ENCODE measurements at regions of chr17 and their contacts with region 1.

Region 1: DNA sequence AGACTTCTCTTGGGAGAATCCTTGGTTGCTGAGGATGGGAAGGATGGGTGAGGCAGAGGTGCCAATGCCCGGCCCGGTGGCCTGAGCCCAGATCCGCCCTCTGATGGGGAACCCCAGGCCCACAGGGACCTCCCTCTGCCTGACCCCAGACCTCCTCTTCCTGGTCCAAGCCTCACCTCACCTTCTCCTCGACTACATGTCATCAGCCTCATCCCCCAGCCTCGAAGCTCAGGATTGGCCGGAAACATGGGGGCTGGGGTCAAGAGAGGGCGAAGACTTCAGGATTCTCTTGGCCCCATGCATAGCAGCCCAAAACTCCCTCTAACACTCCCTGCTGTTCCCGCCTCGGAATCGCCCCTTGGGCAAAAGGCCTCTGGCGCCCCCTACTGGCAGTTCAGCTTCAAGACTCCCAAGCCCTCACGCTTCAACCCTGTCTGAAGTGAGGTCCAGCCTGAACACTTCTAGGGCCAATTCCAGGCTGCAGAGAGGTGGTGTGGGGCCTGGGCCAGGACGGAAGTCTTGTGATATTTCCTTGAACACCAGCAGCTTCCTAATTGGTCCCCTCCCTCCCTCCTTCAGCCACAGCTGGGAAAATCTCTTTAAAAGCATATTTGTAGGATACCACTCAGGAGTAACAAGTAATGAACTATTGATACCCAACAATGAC is 47.2 kb downstream of the ARHGAP27 start:
- DNase-seq: peak; percentile 77 to 91 (median 83)
- H3K4me3 ChIP-seq: no peak overlapping the region
- H3K4me3 Mint-ChIP-seq: no peak overlapping the region
- H3K27ac ChIP-seq: no peak overlapping the region
- H3K27ac Mint-ChIP-seq: no peak overlapping the region
- H3K4me1 ChIP-seq: peaks cover 6% of the 10 kb centered on the region
- H3K4me1 Mint-ChIP-seq: peaks cover 0 to 3% (median 2%) of the 10 kb centered on the region in 3 donors
- H3K27me3 ChIP-seq: no peaks in the 10 kb centered on the region
- H3K27me3 Mint-ChIP-seq: peaks cover 8 to 17% of the 10 kb centered on the region in 2 donors

Region 2: DNA sequence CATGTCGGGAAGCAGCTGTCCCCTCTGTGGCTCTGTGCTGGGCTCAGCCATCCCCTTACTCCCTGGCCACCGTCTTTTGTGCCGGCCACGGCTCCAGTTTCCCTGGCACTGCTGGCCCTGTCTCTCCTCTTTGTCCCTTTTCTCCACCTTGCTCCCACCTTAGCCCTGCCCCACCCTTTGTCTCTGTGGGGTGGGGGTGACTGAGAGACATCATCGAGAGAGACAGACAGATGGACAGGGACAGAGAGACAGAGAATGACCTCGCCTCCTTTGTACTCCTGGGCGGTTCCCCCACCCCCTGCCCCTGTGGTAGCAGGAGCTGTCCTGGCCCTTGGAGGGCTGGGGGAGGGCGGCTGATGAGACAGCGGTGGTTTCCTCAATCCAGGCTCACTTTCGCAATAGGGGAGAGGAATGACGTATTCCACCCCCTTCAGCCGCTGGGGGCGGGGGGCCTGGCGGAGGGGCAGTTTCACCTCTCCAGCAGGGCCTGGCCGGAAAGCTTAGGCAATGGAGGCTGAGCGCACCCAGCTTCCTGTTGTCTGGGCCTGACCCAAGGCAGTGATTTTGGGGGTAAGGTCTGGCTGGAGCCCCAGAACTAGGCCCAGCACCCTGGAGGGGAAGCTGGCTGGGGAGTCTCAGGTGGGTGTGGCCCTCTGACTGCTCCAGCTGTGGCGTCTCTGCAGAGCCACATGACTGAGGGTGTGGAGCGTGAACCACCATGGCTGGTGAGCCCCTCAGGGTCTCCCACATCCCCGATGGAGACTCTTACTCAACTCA is 156.5 kb before region 1 on chr17:
- CTCF ChIA-PET with region 1: interaction called, 26 read pairs
- POLR2A ChIA-PET with region 1: no interaction called
- DNase-seq: peak; percentile 78 to 91 (median 85)
- H3K4me3 ChIP-seq: peak overlapping the region; percentile 95
- H3K4me3 Mint-ChIP-seq: peak overlapping the region; percentile 96 to 100 (median 99)
- H3K27ac ChIP-seq: peak overlapping the region; percentile 98
- H3K27ac Mint-ChIP-seq: peak overlapping the region; percentile 97 to 100 (median 100)
- H3K4me1 ChIP-seq: peaks cover 75% of the 10 kb centered on the region
- H3K4me1 Mint-ChIP-seq: peaks cover 80 to 90% (median 83%) of the 10 kb centered on the region in 3 donors
- H3K27me3 ChIP-seq: no peaks in the 10 kb centered on the region
- H3K27me3 Mint-ChIP-seq: peaks cover 0 to 3% of the 10 kb centered on the region in 2 donors

Region 3: GRCh38 chr17:45235416-45236281 is 149.8 kb before region 1 on chr17:
- CTCF ChIA-PET with region 1: interaction called, 26 read pairs
- POLR2A ChIA-PET with region 1: no interaction called
- DNase-seq: peak; percentile 69 to 84 (median 70)
- H3K4me3 ChIP-seq: no peak overlapping the region
- H3K4me3 Mint-ChIP-seq: peak overlapping the region in 5 of 7 donors; percentile 24 to 72 (median 30)
- H3K27ac ChIP-seq: no peak overlapping the region
- H3K27ac Mint-ChIP-seq: peak overlapping the region; percentile 79 to 98 (median 90)
- H3K4me1 ChIP-seq: peaks cover 35% of the 10 kb centered on the region
- H3K4me1 Mint-ChIP-seq: peaks cover 54 to 63% (median 59%) of the 10 kb centered on the region in 3 donors
- H3K27me3 ChIP-seq: no peaks in the 10 kb centered on the region
- H3K27me3 Mint-ChIP-seq: no peaks in the 10 kb centered on the region

Region 4: GRCh38 chr17:45307290-45308015 is 78.0 kb before region 1 on chr17:
- CTCF ChIA-PET with region 1: interaction called, 19 read pairs
- POLR2A ChIA-PET with region 1: no interaction called
- DNase-seq: peak in 1 of 5 donors; percentile 29
- H3K4me3 ChIP-seq: no peak overlapping the region
- H3K4me3 Mint-ChIP-seq: peak overlapping the region in 4 of 7 donors; percentile 29 to 60 (median 35)
- H3K27ac ChIP-seq: no peak overlapping the region
- H3K27ac Mint-ChIP-seq: peak overlapping the region in 7 of 8 donors; percentile 43 to 83 (median 78)
- H3K4me1 ChIP-seq: peaks cover 72% of the 10 kb centered on the region
- H3K4me1 Mint-ChIP-seq: peaks cover 73 to 88% (median 86%) of the 10 kb centered on the region in 3 donors
- H3K27me3 ChIP-seq: no peaks in the 10 kb centered on the region
- H3K27me3 Mint-ChIP-seq: no peaks in the 10 kb centered on the region

Region 5: GRCh38 chr17:45398800-45399199 is 13.3 kb after region 1 on chr17:
- CTCF ChIA-PET with region 1: interaction called, 15 read pairs
- POLR2A ChIA-PET with region 1: no interaction called
- DNase-seq: no peak
- H3K4me3 ChIP-seq: no peak overlapping the region
- H3K4me3 Mint-ChIP-seq: no peak overlapping the region
- H3K27ac ChIP-seq: no peak overlapping the region
- H3K27ac Mint-ChIP-seq: peak overlapping the region in 4 of 8 donors; percentile 26 to 69 (median 41)
- H3K4me1 ChIP-seq: no peaks in the 10 kb centered on the region
- H3K4me1 Mint-ChIP-seq: peaks cover 0 to 4% (median 2%) of the 10 kb centered on the region in 3 donors
- H3K27me3 ChIP-seq: no peaks in the 10 kb centered on the region
- H3K27me3 Mint-ChIP-seq: no peaks in the 10 kb centered on the region

Region 6: DNA sequence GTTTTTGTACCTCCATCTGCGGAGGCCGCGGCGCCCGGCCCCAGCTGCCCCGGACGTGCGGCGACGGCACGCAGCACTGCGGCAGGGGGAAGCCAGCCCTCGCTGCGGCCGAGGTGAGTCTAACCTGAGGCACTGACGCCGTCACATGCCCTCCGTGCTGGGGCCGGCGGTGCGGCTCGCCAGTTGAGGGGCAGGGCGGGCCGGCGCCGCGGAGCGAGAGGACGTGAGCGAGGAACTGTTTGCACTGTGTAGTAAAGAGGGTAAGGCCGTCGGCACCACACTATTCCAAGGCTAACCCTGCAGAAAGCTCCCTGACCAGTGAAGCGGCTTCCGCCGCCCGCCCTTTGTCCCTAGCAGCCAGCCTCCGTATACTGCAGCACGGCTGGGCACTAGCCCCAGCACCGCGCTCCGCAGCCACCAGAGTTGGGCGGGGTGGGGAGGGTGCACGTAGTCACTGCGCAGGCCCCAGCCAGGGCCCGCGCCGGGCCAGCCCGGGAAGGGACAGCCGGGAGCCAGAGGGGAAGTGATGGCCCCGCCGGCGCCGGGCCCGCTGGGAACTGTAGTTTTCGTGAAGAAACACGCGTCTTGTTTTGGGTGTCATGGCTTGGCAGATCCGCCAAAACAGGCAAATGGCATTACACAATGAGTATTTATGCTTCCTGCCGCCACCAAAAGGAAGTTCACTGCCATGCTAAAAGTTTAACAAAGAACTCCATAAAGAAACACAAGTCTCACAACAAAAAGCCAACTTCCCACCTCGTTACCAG is 808.3 kb after region 1 on chr17:
- CTCF ChIA-PET with region 1: no interaction called
- POLR2A ChIA-PET with region 1: no interaction called
- DNase-seq: peak; percentile 90 to 96 (median 95)
- H3K4me3 ChIP-seq: peak overlapping the region; percentile 71
- H3K4me3 Mint-ChIP-seq: peak overlapping the region; percentile 79 to 94 (median 90)
- H3K27ac ChIP-seq: peak overlapping the region; percentile 96
- H3K27ac Mint-ChIP-seq: peak overlapping the region; percentile 92 to 99 (median 98)
- H3K4me1 ChIP-seq: peaks cover 65% of the 10 kb centered on the region
- H3K4me1 Mint-ChIP-seq: peaks cover 52 to 72% (median 66%) of the 10 kb centered on the region in 3 donors
- H3K27me3 ChIP-seq: no peaks in the 10 kb centered on the region
- H3K27me3 Mint-ChIP-seq: no peaks in the 10 kb centered on the region

Measured in CD8-positive, alpha-beta memory T cell (primary cell).